Ascending aorta (tissue), 2 donors: ENCODE measurements at regions of chr16 and their contacts with region 1.

Region 1: GRCh38 chr16:8674413-8675022 is at the start of gene ABAT:
- DNase-seq: peak; percentile 55 to 94
- H3K4me3 ChIP-seq: peak within 1 kb of the TSS; percentile 75 to 84
- H3K27ac ChIP-seq: peak within 1 kb of the TSS; percentile 56 to 67
- H3K4me1 ChIP-seq: peaks cover 0 to 11% of the 10 kb centered on the region in 2 donors
- H3K27me3 ChIP-seq: no peaks in the 10 kb centered on the region
- CTCF ChIP-seq: no peak
- total RNA-seq, gene ABAT: 1.8 TPM

Region 2: DNA sequence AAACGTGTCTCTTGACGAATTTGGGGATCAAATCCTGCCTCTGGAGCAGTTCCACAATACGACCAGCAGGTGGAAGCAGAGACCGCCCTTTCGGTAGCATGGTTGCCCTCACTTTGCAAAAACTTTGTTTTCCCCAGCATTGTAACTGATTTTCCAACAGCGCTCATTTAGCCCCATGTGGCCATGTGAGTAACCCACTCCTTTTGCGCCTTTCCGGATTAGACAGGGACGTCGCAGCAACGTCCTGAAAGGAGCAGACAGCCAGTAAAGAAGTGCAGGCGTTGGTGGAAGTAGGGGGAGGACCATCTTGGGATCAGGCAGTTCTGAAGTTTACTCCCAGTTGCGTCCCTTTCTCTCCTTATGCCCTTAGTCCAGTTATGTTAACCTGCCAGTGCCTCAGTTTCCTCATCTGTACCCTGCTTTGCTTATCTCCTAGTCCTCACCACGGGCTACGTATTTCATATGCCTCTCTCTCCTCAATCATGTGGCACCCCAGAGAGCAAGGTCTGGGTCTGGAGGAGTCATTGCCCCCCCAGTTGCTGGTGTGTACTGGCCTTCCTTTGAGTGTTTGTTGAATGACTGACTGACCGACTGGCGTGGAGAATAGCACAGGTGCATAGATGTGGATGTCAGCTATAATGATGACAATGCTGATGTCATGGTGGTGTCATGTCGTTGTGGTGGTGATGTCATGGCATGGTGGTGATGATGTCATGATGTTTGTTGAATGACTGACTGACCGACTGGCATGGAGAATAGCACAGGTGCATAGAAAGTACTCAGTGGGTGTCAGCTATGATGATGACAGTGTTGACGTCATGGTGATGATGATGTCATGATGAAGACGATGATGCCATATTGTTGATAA is 106.5 kb before region 1 on chr16:
- intact Hi-C with region 1: loop called (anchors 5 kb)
- DNase-seq: peak; percentile 37 to 86
- H3K4me3 ChIP-seq: no peak overlapping the region
- H3K27ac ChIP-seq: no peak overlapping the region
- H3K4me1 ChIP-seq: peaks cover 0 to 11% of the 10 kb centered on the region in 2 donors
- H3K27me3 ChIP-seq: no peaks in the 10 kb centered on the region
- CTCF ChIP-seq: peak; percentile 94 to 99 (median 97)

Region 3: DNA sequence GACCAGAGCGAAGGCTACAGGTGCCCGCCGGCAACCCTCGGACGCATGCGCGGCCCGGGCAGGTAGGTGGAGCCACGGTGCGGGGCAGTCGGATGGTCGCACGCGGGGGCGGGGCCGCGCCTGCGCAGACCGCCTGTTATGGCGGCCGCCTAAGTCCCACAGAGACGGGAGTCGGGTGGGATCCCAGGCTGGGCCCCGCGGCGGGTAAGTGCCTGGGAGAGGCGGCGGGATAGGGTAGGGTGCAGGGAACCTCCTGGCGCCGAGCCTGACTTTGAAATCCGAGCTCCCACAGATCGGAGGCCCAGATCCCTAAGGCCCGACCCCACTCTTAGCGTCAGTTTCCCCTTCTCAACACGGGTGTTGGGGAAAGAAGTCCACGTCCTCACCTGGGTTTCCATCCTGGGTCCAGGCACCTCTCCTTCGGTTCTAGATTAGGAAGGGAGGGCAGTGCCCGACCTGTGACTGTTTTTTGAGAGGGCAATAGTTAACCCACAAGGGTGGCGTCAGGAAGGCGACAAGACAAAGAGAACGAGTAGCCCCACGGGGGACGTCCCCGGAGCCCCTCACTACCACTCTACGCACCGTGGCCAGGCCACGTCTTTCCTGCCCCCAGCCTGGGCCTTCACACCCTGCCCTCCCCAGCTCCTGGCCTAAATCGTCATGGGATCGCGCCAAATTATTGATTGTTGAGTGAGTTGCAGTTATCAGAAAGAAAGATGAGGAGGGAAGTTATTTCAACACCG is 52.8 kb before region 1 on chr16 and contains the start of gene METTL22:
- intact Hi-C with region 1: loop called (anchors 2 kb)
- DNase-seq: peak; percentile 50 to 91
- H3K4me3 ChIP-seq: peak within 1 kb of the TSS; percentile 89 to 98
- H3K27ac ChIP-seq: peak within 1 kb of the TSS; percentile 66 to 80
- H3K4me1 ChIP-seq: peaks cover 10 to 11% of the 10 kb centered on the region in 2 donors
- H3K27me3 ChIP-seq: no peaks in the 10 kb centered on the region
- CTCF ChIP-seq: no peak
- total RNA-seq, gene METTL22: 31.7 TPM

Region 4: DNA sequence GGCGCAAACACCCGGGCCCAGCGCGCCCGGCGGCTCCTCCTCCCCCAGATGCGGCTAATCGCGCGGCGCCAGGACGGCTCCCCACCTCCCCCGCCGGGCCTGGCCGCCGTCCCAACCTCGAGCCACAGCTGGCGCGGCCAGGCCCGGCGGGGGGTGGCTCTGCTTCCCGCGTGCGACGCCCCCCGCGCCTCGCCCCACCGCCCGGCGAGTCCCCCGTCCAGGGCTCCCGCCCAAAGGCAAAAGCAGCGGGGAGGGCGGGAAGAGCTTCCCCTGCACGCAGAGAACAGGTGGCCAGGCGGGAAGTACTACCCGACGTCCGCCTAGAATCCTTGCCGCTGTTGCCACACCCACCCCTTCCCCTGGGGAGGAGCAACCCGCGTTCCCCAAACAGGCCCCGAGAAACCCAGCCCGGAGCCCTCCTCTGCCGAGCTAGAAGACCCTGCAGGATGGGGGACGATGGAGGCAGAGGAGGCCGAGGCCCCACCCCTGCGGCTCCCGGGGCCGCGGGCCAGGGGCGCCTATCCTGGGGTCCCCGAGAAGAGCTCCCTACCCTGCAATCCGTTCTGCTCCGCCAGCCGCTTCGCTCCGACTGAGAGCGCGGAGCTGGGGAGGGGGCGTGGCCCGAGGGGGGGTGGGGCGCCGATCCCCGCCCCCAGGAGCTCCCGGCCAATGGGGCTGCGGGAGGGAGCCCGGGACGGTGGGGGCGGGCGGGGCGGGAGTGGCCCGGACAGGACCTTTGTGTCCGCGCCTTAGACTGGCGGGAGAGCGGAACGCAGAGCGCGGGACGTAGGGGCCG is 194.1 kb after region 1 on chr16 and contains the start of gene CARHSP1:
- intact Hi-C with region 1: loop called (anchors 2 kb)
- DNase-seq: peak; percentile 61 to 91
- H3K4me3 ChIP-seq: peak within 1 kb of the TSS; percentile 80 to 92
- H3K27ac ChIP-seq: peak within 1 kb of the TSS; percentile 55 to 91
- H3K4me1 ChIP-seq: peaks cover 11 to 46% of the 10 kb centered on the region in 2 donors
- H3K27me3 ChIP-seq: no peaks in the 10 kb centered on the region
- CTCF ChIP-seq: no peak
- total RNA-seq, gene CARHSP1: 151 TPM

Region 5: DNA sequence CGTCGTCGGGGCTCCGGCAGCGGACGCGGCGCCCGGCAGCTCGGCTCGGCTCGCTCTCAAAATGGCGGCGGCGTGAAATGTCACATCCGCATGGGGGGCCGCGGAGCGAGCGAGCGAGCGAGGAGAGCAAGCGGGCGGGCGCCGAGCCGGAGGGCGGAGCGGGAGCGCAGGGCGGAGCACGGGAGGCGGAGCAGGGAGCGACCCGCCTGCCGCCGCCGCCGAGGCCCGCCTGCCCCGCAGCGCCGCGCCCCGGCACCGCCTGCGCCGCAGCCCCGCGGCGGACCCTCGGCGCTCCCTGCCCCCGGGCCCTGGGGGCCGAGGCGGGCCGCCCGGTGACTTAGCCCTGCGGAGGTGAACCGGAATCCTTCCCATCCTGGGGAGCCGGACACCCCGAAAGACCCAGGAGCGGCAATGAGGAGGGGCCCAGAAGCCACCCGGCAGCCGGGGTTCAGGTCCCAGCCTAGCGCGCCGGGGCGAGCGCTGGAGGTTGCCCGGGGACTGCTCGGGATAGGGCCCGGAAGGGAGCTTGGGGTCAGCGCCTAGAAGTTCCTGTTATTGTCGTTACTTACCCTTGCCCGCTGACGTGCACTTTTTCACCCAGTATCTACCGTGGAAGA is 289.4 kb after region 1 on chr16 and contains the start of gene USP7:
- intact Hi-C with region 1: loop called (anchors 5 kb)
- DNase-seq: peak; percentile 51 to 95
- H3K4me3 ChIP-seq: peak within 1 kb of the TSS; percentile 75 to 84
- H3K27ac ChIP-seq: peak within 1 kb of the TSS; percentile 75 to 78
- H3K4me1 ChIP-seq: peaks cover 15 to 31% of the 10 kb centered on the region in 2 donors
- H3K27me3 ChIP-seq: no peaks in the 10 kb centered on the region
- CTCF ChIP-seq: no peak
- total RNA-seq, gene USP7: 55.3 TPM